ENCODE measurements at regions of chr5 and their contacts with region 1.

Region 1: DNA sequence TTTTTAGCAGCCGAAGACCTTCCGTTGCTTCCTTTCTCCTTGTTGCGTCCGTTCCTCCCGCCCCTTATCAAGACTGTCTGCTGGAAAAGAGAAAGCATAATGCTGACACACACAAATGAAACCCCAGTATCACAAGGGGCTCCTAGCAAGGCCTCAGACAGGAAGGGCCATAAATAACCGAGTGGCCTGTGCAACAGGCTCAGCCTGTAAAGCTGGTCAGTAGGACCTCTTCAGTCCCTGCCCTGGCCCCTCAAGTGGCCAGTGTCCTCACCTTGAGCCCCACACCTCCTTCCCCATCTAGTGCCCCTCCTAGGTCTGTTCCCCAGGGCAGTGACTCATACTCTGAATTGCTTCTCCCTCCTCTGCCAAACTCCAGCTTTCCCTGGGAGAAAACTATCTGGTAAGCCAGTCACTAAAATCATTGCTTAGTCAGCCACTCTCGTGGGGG is 174.6 kb upstream of the IL12B start:
- DNase-seq: no peak
- ATAC-seq: no peak
- H3K4me3 Mint-ChIP-seq: no peak overlapping the region
- H3K27ac Mint-ChIP-seq: no peak overlapping the region
- H3K4me1 Mint-ChIP-seq: no peaks in the 10 kb centered on the region
- H3K27me3 Mint-ChIP-seq: peaks cover 2% of the 10 kb centered on the region
- CTCF ChIP-seq: no peak

Region 2: DNA sequence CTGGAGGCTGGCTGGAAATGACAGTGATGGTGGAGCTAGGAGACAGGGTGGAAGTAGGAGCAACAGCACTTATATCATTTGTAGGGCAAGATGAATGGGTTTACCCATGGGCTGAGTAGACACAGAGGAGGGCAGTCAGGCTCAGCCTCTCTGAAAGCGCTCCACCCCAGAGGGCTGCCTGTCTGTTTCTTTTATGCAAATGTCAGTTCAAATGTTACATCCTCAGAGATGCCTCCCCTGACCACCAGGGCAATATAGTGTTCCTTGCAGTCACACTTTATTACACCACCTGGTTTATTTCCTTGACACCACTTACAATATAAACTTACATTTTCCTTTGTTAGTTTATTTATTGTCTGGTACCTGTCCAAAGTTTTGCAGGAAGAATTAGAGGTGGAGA is 15.1 kb before region 1 on chr5:
- CTCF ChIA-PET with region 1: no interaction called
- POLR2A ChIA-PET with region 1: no interaction called
- intact Hi-C with region 1: no loop called
- DNase-seq: no peak
- ATAC-seq: no peak
- H3K4me3 Mint-ChIP-seq: no peak overlapping the region
- H3K27ac Mint-ChIP-seq: no peak overlapping the region
- H3K4me1 Mint-ChIP-seq: no peaks in the 10 kb centered on the region
- H3K27me3 Mint-ChIP-seq: peaks cover 6% of the 10 kb centered on the region
- CTCF ChIP-seq: no peak

Region 3: GRCh38 chr5:159515909-159516415 is 11.1 kb after region 1 on chr5:
- CTCF ChIA-PET with region 1: interaction called, 13 read pairs
- POLR2A ChIA-PET with region 1: no interaction called
- intact Hi-C with region 1: no loop called
- DNase-seq: peak; percentile 82
- ATAC-seq: peak; percentile 99
- H3K4me3 Mint-ChIP-seq: no peak overlapping the region
- H3K27ac Mint-ChIP-seq: no peak overlapping the region
- H3K4me1 Mint-ChIP-seq: peaks cover 8% of the 10 kb centered on the region
- H3K27me3 Mint-ChIP-seq: peaks cover 7% of the 10 kb centered on the region
- CTCF ChIP-seq: peak; percentile 86

Measured in activated CD8-positive, alpha-beta T cell treated with anti-CD3 and anti-CD28 coated beads for 36 hours (primary cell).